PC-3 (cell line): ENCODE measurements at regions of chr18 and their contacts with region 1.

Region 1: DNA sequence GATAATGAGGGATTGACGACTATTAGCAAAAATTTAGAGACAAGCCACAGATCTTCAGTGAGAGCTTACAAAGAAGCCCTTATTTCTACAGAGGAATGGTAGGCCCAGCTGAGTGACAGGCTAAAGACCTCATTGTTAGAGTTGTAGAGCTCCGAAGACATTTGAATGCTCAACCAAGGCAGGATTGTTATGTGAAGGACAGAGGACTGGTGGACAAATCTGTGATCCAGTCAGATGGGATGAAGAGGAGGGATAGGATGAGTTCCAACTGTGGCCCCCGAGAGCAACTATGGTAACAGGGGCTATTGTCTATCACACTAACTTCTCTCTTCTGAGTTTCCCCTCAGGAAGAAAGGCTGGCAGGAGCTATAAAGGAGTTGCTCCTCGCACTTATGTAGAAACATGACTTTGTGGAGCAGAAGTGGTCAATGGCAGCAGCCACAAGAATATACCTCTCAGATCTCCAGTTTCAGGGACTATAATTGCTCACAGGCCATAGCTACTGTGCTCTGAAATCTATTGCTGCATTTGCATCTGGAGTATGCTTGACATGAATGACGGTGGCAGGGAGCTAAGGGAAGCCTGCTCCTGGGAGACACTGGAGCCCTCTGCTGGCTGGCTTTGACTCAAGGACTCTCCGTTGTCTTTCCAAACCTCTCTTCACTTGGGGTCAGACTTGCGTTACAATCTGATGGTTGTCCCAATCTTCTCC is 50.3 kb upstream of the GREB1L start:
- DNase-seq: peak; percentile 65
- ATAC-seq: peak; percentile 84
- H3K4me3 ChIP-seq: no peak overlapping the region
- H3K27ac ChIP-seq: no peak overlapping the region
- H3K4me1 ChIP-seq: peaks cover 10% of the 10 kb centered on the region
- H3K27me3 ChIP-seq: no peaks in the 10 kb centered on the region
- CTCF ChIP-seq: peak; percentile 81

Region 2: DNA sequence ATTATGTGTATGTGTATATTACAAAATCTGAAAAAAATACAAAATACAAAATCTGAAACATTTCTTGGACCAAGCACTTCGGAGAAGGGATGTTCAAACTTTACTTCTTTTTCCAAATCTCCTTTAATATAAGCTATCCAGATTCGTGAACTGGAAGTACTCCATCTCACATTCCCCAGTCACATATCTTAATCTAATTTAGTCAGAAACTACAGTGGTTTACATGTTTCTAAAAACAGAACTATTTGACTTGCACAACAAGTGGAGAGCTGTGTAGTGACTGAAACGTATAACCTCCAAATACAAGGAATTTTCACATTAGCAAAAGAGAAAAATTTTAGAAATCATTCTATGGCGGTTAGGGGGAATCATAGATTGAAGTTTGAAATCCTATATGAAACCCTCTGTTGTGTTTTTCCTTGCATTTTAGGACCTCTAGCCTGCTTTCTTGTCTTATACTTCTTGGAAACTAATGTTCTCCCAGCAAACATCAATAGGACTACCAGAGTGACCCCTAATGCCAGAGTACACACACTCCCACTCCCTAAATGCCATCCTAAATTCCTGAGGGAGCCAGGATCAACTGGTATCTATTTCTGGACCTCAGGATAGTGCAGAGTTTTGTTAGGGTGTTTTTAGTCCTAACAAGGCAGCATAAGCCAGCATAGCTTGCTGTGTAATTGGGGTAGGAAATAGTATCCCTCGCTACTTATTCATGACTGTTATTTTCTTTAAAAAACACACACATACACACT is 49.9 kb before region 1 on chr18:
- CTCF ChIA-PET with region 1: no interaction called
- POLR2A ChIA-PET with region 1: no interaction called
- intact Hi-C with region 1: no loop called
- DNase-seq: no peak
- ATAC-seq: no peak
- H3K4me3 ChIP-seq: no peak overlapping the region
- H3K27ac ChIP-seq: no peak overlapping the region
- H3K4me1 ChIP-seq: no peaks in the 10 kb centered on the region
- H3K27me3 ChIP-seq: no peaks in the 10 kb centered on the region
- CTCF ChIP-seq: no peak

Region 3: GRCh38 chr18:21218630-21219261 is 27.0 kb after region 1 on chr18:
- CTCF ChIA-PET with region 1: no interaction called
- POLR2A ChIA-PET with region 1: no interaction called
- intact Hi-C with region 1: loop called (anchors 1 kb)
- DNase-seq: no peak
- ATAC-seq: no peak
- H3K4me3 ChIP-seq: no peak overlapping the region
- H3K27ac ChIP-seq: no peak overlapping the region
- H3K4me1 ChIP-seq: peaks cover 12% of the 10 kb centered on the region
- H3K27me3 ChIP-seq: no peaks in the 10 kb centered on the region
- CTCF ChIP-seq: no peak

Region 4: DNA sequence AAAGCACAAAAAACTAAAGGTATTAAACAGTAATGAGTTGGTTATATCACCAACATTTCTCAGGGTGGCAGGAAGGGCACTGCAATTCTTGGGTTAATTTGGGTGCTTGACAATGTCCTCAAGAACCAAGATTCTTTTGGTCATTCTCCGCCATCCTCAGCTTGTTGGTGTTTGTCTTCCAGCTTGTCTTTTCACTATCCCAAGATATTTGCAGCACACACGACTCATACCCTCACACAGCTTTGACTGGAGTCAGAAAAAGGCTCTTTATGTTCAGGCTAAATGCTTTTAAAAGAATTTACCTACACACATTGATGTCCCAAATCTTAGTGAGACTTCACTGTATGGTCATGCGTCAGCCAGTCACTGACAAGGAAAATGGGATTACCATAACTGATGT is 62.8 kb after region 1 on chr18:
- CTCF ChIA-PET with region 1: no interaction called
- POLR2A ChIA-PET with region 1: no interaction called
- intact Hi-C with region 1: no loop called
- DNase-seq: no peak
- ATAC-seq: no peak
- H3K4me3 ChIP-seq: no peak overlapping the region
- H3K27ac ChIP-seq: no peak overlapping the region
- H3K4me1 ChIP-seq: no peaks in the 10 kb centered on the region; the same call in 1 of the 2 replicates
- H3K27me3 ChIP-seq: no peaks in the 10 kb centered on the region
- CTCF ChIP-seq: no peak

Region 5: GRCh38 chr18:21330122-21330701 is 138.5 kb after region 1 on chr18:
- CTCF ChIA-PET with region 1: interaction called, 4 read pairs
- POLR2A ChIA-PET with region 1: no interaction called
- intact Hi-C with region 1: loop called (anchors 5 kb)
- DNase-seq: peak; percentile 93
- ATAC-seq: peak; percentile 91
- H3K4me3 ChIP-seq: peak overlapping the region; percentile 34; the same call in 1 of the 2 replicates
- H3K27ac ChIP-seq: peak overlapping the region; percentile 95
- H3K4me1 ChIP-seq: peaks cover 59% of the 10 kb centered on the region
- H3K27me3 ChIP-seq: no peaks in the 10 kb centered on the region
- CTCF ChIP-seq: no peak

Region 6: GRCh38 chr18:21444465-21445023 is 252.8 kb after region 1 on chr18:
- CTCF ChIA-PET with region 1: interaction called, 3 read pairs
- POLR2A ChIA-PET with region 1: no interaction called
- intact Hi-C with region 1: loop called (anchors 1 kb)
- DNase-seq: peak; percentile 78
- ATAC-seq: peak; percentile 78
- H3K4me3 ChIP-seq: no peak overlapping the region
- H3K27ac ChIP-seq: no peak overlapping the region
- H3K4me1 ChIP-seq: peaks cover 14% of the 10 kb centered on the region
- H3K27me3 ChIP-seq: no peaks in the 10 kb centered on the region
- CTCF ChIP-seq: peak; percentile 95

Region 7: DNA sequence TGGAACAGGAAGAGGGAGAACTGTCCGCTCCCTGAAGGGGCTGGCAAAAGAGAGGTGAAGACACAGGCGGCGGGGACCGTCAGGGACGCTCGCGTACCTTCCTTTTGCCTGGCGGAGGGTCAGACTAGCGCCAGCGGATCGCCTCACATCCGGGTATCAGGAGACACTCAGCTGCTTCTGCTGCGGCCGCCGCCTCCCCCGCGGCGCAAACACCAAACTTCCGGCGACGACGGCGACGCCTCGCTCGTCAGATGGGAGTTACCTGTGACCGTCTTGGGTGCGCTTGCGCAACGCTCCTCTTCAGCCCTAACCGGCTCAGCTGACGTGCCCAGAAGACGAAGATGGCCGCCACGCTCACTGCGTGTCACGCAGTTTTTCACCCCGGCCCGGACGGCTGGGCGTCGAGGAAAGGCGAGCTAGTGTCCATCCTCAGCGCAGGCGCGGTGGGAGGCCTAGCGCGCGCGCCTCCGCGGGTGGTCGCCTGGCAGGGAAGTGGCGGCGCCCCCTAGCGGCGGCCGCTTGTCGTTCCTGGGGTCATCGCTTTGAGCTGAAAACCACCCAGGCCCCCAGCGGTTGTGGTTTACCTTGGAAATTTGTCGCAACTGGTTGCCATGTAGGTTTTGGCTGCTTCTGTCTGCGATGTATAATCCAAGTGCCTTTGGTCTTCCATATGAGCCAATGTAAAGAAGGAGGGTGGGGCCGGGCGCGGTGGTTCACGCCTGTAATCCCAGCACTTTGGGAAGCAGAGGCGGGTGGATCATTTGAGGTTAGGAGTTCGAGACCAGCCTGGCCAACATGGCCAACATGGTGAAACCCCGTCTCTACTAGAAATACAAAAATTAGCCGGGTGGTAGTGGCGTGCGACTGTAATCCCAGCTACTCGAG is 409.0 kb after region 1 on chr18 and contains the start of gene ESCO1:
- CTCF ChIA-PET with region 1: interaction called, 4 read pairs
- POLR2A ChIA-PET with region 1: no interaction called
- intact Hi-C with region 1: loop called (anchors 10 kb)
- DNase-seq: peak; percentile 98
- ATAC-seq: peak; percentile 91
- H3K4me3 ChIP-seq: peak within 1 kb of the TSS; percentile 99
- H3K27ac ChIP-seq: peak within 1 kb of the TSS; percentile 94
- H3K4me1 ChIP-seq: peaks cover 14% of the 10 kb centered on the region
- H3K27me3 ChIP-seq: no peaks in the 10 kb centered on the region
- CTCF ChIP-seq: peak; percentile 80
- total RNA-seq, gene ESCO1: 17.0 and 17.5 TPM in 2 replicates